PC-9 (cell line): ENCODE measurements at regions of chr10 and their contacts with region 1.

Region 1: DNA sequence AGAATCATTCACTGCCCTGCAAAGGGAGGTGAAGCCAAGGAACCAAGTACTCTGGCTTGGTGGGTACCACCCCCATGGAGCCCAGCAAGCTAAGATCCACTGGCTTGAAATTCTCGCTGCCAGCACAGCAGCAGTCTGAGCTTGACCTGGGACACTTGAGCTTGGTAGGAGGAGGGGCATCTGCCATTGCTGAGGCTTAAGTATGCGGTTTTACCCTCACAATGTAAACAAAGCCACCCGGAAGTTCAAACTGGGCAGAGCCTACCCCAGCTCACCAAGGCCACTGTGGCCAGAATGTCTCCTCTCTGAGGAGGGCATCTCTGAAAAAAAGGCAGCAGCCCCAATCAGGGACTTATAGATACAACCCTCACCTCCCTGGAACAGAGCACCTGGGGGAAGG is 1050.0 kb upstream of the GHITM start:
- DNase-seq: no peak
- H3K4me3 ChIP-seq: no peak overlapping the region
- H3K27ac ChIP-seq: no peak overlapping the region
- H3K4me1 ChIP-seq: no peaks in the 10 kb centered on the region
- H3K27me3 ChIP-seq: no peaks in the 10 kb centered on the region
- CTCF ChIP-seq: no peak

Region 2: DNA sequence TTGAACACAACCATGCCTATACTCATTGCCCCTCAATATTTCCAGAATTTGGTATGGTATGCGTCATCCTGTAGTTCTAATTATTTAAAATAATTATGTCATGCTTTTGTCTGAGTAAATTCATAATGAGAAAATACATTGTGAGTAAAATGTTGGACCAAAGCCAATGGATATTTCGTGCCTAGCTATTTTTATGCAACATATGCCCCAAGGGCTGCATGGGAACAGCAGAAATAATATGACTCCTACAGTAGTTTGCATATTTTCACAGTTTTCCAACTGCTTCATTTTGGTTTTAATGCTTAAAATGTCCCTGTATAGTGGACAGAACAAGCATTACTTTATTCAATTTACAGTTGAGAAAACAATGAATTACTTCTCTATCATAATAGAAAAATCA is 65.7 kb before region 1 on chr10:
- CTCF ChIA-PET with region 1: no interaction called
- POLR2A ChIA-PET with region 1: no interaction called
- intact Hi-C with region 1: no loop called
- DNase-seq: no peak
- H3K4me3 ChIP-seq: no peak overlapping the region
- H3K27ac ChIP-seq: no peak overlapping the region
- H3K4me1 ChIP-seq: no peaks in the 10 kb centered on the region
- H3K27me3 ChIP-seq: no peaks in the 10 kb centered on the region
- CTCF ChIP-seq: no peak

Region 3: GRCh38 chr10:83205861-83206260 is 116.5 kb after region 1 on chr10:
- CTCF ChIA-PET with region 1: no interaction called
- POLR2A ChIA-PET with region 1: no interaction called
- intact Hi-C with region 1: no loop called
- DNase-seq: no peak
- H3K4me3 ChIP-seq: no peak overlapping the region
- H3K27ac ChIP-seq: no peak overlapping the region
- H3K4me1 ChIP-seq: no peaks in the 10 kb centered on the region
- H3K27me3 ChIP-seq: no peaks in the 10 kb centered on the region
- CTCF ChIP-seq: no peak

Region 4: DNA sequence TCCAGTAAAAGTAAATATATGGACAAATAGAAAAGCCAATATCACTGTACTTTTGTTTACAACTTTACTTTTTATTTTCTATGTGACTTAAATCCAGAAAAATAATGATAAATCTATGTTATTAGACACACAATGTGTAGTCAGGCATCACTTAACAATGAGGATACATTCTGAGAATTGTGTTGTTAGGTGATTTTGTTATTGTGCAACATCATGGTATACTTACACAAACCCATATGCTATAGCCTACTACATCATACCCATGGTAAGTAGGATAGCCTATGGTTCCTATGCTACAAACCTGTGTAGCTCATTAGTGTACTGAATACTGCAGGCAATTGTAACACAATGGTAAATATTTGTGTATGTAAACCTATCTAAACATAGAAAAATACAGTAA is 268.3 kb after region 1 on chr10:
- CTCF ChIA-PET with region 1: no interaction called
- POLR2A ChIA-PET with region 1: no interaction called
- intact Hi-C with region 1: no loop called
- DNase-seq: no peak
- H3K4me3 ChIP-seq: no peak overlapping the region
- H3K27ac ChIP-seq: no peak overlapping the region
- H3K4me1 ChIP-seq: no peaks in the 10 kb centered on the region
- H3K27me3 ChIP-seq: no peaks in the 10 kb centered on the region
- CTCF ChIP-seq: no peak

Region 5: DNA sequence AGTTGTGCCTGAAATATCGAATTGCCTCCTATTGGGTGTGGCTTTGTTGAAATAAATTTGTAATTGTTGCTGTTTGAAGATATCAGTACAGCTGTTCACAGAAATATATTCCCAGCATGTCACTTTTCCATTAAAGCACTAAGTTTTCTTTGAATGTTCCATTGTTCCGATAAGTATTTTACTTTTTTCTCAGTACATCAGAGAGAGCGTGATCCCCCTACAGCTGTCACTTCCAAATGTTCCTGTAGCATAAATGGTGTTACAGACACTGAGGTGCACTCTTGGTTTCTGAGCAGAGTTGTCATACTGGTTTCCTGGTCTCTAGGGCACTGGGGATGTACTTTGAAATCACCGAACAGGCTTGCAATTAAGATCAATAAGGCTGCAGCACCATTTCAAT is 1428.2 kb after region 1 on chr10:
- CTCF ChIA-PET with region 1: no interaction called
- POLR2A ChIA-PET with region 1: interaction called, 12 read pairs
- intact Hi-C with region 1: no loop called
- DNase-seq: no peak
- H3K4me3 ChIP-seq: no peak overlapping the region
- H3K27ac ChIP-seq: no peak overlapping the region
- H3K4me1 ChIP-seq: 0 out of 2 replicates have a peak, but pooled peaks cover 3% of the 10 kb centered on the region
- H3K27me3 ChIP-seq: no peaks in the 10 kb centered on the region
- CTCF ChIP-seq: no peak